ENCODE measurements at regions of chr6 and their contacts with region 1.

Region 1: DNA sequence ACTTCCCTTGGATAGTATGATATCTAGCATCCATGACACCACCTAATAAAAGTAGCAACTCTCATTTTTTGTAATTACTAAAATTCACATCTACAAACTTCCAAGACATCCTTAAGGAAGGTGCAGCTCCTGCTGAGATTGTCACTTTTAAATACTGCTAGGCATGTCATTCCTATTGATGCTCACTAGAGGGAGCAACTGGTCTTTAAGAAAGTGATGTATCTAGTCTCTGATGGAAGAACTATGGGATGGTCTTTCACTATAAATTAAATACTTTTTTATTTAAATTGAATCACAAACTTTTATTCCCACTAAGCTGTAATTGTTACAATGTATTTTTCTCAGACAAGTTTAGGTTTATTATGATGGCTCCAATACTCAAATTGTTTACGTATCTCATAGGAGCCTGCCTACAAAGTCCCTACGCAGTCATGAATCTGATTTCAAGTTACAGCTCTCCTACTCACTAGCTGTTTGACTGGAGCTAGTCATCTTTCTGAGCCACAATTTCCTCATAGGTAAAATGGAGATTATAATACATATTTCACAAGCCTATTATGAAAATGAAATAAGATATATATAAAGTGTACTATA is 8.1 kb upstream of the TSPYL1 start:
- DNase-seq: no peak
- H3K4me3 ChIP-seq: no peak overlapping the region
- H3K27me3 ChIP-seq: no peaks in the 10 kb centered on the region
- CTCF ChIP-seq: peak; percentile 80

Region 2: DNA sequence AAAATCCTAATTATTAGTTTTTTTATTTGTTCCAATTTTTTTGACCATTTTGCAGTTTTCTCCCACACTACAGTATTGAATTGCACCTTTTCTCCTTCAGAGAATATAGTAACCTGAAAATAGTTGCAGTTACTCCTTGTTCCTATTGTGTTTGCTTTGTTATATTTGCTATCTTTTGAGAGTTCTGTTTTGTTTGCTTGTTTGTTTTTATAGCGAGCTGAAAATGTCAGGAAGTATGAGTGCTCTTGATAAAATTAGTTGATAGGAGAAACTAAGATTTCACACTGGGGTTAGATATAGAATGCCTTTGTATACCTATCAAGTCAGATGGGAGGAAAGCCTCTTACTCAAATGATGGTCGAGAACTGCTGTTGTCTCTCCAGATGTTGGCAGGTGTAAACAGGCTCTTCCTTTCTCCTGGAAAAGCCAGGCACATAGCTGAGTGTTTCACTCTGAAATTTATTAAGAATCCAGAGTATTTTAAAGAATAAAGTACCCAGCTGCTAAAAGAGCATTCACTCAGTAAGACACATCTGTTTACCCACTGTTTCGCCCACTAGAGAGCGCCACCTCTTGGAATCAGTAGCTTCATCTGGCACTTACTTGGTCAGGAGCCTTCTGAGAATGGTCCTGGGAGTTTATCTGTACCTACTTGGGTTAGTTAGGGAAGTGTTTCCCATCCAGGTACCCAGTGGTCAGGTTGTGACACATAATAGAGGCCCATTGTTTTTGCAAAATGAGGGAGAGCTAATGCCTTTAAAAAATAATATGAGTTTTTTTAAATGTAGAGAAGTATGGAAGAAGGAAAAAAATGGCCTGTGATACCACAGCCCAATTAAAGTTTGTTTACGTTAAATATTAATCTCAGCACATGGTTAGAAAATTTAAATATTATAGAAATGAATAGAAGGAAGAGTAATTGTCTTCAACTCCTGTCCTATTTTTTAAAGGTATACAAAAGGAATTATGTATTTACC is 175.9 kb before region 1 on chr6:
- CTCF ChIA-PET with region 1: no interaction called
- POLR2A ChIA-PET with region 1: no interaction called
- DNase-seq: no peak
- H3K4me3 ChIP-seq: no peak overlapping the region
- H3K27me3 ChIP-seq: no peaks in the 10 kb centered on the region
- CTCF ChIP-seq: peak; percentile 72

Region 3: GRCh38 chr6:116180374-116180773 is 107.4 kb before region 1 on chr6:
- CTCF ChIA-PET with region 1: no interaction called
- POLR2A ChIA-PET with region 1: no interaction called
- DNase-seq: no peak
- H3K4me3 ChIP-seq: no peak overlapping the region
- H3K27me3 ChIP-seq: no peaks in the 10 kb centered on the region
- CTCF ChIP-seq: no peak

Region 4: DNA sequence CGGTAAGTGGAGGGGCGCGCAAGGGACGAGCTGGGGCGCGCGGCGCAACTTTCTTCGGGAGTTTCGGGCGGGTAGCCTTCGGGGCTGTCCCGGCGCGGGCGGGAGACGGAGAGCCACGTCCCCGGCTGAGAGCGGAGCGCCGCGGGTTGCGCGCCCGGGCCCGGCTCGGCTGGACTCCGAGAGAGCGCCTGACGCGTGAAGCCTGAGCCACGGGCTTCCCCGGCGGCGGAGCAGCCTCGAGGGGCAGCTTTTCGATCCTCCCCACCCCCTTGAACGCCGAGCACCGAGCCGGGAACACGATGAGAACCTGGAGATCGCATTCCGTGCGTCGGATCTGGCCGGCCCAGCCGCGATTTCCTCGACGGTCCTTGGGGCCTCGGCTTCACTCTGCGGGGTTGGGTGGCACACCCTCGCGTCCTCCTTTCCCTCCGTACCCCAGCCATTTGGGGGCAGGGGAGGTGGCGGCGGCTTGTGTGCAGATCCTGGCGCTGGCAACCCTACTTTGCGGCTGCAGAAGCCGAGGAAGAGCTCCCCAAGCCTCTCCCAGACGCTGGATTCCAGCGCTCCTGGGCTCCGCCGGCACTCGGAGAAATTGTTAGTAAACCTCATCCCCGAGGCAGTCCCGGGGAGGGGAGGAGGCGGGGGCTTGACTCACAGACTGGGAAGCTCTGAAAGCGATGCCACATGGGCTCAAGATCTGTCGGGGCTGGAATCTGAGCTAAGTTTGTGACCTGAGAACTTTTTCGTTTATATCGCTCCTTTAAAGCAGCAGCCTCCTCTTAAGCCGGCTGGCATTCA is 83.5 kb after region 1 on chr6:
- CTCF ChIA-PET with region 1: interaction called, 16 read pairs
- POLR2A ChIA-PET with region 1: no interaction called
- DNase-seq: peak; percentile 65
- H3K4me3 ChIP-seq: peak overlapping the region; percentile 75
- H3K27me3 ChIP-seq: no peaks in the 10 kb centered on the region
- CTCF ChIP-seq: no peak

Region 5: DNA sequence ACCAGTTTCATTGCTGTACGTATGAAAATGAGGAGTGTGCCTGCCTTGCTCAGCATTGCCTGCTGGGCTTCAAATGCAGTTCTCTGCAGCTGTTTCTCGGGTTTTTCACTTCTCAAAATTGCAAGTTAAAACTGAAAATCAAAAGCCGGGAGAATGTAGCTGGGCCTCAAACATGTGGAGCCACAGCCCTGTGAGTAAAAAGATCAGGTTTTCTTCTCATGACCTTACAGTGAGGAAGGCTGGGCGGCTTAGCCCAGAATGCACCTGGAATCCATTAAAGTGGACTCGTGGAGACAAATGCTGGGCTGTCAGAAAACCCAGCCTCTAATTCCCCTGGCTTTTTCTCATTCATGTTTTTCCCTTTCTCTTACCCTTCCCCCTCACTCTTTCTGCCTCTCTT is 117.4 kb after region 1 on chr6:
- CTCF ChIA-PET with region 1: interaction called, 12 read pairs
- POLR2A ChIA-PET with region 1: no interaction called
- DNase-seq: peak; percentile 63
- H3K4me3 ChIP-seq: no peak overlapping the region
- H3K27me3 ChIP-seq: no peaks in the 10 kb centered on the region
- CTCF ChIP-seq: no peak

Region 6: GRCh38 chr6:116444092-116444491 is 156.3 kb after region 1 on chr6:
- CTCF ChIA-PET with region 1: interaction called, 26 read pairs
- POLR2A ChIA-PET with region 1: no interaction called
- DNase-seq: no peak
- H3K4me3 ChIP-seq: no peak overlapping the region
- H3K27me3 ChIP-seq: no peaks in the 10 kb centered on the region
- CTCF ChIP-seq: peak; percentile 54

Region 7: DNA sequence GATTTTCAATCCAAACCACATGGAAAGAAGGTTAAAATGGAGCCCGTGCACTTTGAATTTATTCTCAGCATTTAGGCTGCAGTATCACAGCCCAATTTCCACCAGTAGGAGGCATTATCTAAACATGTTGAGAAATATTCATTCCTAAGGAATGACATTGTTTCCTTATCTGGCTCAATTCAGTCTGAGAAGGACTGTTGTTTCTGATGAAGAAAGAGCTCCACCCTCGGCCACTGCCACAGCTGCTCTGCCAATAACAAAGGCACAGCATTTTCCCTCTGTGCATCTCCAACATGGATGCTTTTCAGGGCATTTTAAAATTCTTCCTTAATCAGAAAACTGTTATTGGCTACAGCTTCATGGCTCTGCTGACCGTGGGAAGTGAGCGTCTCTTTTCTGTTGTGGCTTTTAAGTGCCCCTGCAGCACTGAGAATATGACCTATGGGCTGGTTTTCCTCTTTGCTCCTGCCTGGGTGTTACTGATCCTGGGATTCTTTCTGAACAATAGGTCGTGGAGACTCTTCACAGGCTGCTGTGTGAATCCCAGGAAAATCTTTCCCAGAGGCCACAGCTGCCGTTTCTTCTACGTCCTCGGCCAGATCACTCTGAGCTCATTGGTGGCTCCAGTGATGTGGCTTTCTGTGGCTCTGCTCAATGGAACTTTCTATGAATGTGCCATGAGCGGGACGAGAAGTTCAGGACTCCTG is 223.8 kb after region 1 on chr6 and contains the start of gene CALHM5:
- CTCF ChIA-PET with region 1: interaction called, 26 read pairs
- POLR2A ChIA-PET with region 1: no interaction called
- DNase-seq: peak; percentile 58
- H3K4me3 ChIP-seq: peak within 1 kb of the TSS; percentile 46
- H3K27me3 ChIP-seq: no peaks in the 10 kb centered on the region
- CTCF ChIP-seq: peak; percentile 68
- polyA plus RNA-seq, gene CALHM5: 4.4 and 6.6 TPM in 2 replicates

Region 8: DNA sequence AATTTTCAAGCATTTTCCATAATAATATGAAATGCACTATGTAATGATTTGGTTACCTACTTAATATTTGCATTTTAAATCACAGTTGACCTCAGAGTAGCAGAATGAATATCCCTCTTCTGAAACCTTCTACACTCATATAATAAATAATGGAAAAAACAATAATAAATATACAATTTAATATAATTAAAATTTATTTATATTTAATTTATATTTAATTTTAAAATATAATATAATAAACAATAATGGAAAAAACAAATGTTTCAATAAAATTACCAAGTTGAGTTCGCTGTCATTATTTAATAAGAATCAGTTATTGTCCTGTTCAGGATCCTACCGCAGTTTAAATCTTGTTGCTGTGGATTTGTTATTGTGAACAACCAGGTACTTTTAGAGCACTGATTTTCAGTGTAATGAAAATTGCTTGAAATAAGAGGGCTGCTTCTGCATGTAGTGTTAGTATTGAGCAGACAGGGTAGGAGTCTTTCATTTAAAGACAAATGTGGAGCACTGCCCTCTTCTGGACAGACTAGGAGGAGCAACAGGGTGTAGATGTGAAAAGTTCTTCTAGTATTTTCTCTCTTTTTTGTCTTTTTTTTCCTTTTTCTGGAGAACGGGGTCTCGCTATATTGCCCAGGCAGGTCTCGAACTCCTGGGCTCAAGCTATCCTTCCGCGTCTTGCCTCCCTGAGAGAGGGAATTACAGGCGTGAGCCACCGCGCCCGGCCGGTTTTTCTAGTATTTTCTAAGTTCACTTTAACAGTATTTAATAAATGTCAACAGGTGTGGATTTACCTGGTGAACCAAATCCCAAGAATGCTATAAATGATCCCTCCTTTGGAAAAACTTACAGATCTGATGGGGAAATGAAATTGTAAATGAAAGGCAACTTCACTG is 244.1 kb after region 1 on chr6:
- CTCF ChIA-PET with region 1: interaction called, 35 read pairs
- POLR2A ChIA-PET with region 1: no interaction called
- DNase-seq: no peak
- H3K4me3 ChIP-seq: no peak overlapping the region
- H3K27me3 ChIP-seq: no peaks in the 10 kb centered on the region
- CTCF ChIP-seq: peak; percentile 76